ENCODE measurements at regions of chrX and their contacts with region 1.

Region 1: GRCh38 chrX:71393919-71394318 is 27.8 kb downstream of the TAF1 start:
- DNase-seq: no peak
- H3K4me3 ChIP-seq: no peak overlapping the region
- CTCF ChIP-seq: no peak

Region 2: GRCh38 chrX:71301195-71301924 is 92.6 kb before region 1 on chrX and contains the start of gene ITGB1BP2:
- in situ Hi-C with region 1: no loop called
- DNase-seq: peak; percentile 1
- H3K4me3 ChIP-seq: no peak within 1 kb of the TSS
- CTCF ChIP-seq: no peak

Region 3: GRCh38 chrX:71541210-71542022 is 147.5 kb after region 1 on chrX:
- in situ Hi-C with region 1: loop called (anchors 10 kb)
- DNase-seq: no peak
- H3K4me3 ChIP-seq: no peak overlapping the region
- CTCF ChIP-seq: no peak

Region 4: DNA sequence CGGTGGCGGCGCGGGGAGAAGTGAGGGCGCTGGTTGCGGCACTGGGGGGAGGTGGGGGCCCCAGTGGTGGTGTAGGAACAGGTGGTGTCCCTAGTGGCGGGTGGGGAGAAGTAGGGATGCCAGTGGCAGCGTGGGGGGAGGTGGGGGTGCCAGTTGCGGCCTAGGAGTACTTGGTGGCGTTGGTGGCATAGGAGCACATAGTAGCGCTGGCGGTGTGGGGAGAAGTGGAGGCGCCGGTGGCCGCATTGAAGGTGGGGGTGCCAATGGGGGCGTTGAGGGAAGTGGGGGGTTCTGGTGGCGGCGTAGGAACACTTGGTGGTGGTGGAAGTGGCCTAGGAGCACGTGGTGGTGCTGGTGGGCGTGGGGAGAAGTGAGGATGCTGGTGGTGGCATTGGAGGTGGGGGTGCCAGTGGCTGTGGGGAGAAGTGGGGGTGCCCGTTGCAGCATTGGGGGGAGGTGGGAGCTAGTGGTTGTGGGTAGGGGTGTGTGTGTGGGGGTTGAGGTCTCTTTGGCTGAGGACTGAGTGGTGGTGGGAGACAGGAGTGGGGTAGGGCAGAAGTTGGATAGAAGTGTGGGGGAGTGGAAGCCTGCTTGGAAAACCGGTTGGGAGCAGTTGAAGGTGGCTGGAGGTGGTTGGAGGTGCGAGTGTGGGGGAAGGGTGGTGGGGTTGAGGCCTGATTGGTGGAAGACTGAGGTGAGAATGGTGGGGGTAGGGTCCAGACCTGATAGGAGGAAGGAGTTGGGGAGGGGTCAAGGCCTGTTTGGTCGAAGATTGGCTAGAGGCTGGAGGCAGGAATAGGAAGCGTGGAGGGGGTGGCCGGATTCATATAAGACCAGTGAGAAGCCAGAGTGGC is 185.4 kb after region 1 on chrX:
- in situ Hi-C with region 1: no loop called
- DNase-seq: no peak
- H3K4me3 ChIP-seq: no peak overlapping the region
- CTCF ChIP-seq: no peak